Activated B cell treated with CpG ODN at 0.5 μM for 24 hours (primary cell): ENCODE measurements at regions of chr1 and their contacts with region 1.

Region 1: DNA sequence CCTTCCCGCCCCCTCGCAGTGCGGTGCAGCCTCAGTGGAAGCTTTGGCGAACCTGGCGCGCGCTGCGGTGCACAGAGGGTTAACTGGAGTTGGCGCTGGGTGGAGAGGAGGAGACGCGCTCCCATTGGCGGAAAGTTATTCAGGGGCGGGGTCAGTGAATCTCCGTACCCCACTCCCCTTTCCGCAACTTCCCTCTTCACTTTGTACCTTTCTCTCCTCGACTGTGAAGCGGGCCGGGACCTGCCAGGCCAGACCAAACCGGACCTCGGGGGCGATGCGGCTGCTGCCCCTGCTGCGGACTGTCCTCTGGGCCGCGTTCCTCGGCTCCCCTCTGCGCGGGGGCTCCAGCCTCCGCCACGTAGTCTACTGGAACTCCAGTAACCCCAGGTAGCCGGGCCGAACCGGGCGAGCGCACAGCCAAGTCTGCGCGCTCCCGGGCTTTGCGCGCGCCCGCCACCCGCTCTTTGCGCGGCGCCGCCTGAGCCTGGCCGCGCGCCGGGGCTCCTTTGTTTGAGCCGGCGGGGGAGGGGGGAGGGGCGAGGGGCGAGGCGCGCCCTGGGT is at the start of gene EFNA4:
- DNase-seq: peak; percentile 73
- ATAC-seq: peak; percentile 83
- H3K4me3 Mint-ChIP-seq: peak within 1 kb of the TSS; percentile 83
- H3K27ac Mint-ChIP-seq: peak within 1 kb of the TSS; percentile 67
- H3K4me1 Mint-ChIP-seq: peaks cover 50% of the 10 kb centered on the region
- H3K27me3 Mint-ChIP-seq: no peaks in the 10 kb centered on the region
- CTCF ChIP-seq: no peak
- total RNA-seq, gene EFNA4: 7.8 and 9.5 TPM in 2 replicates

Region 2: DNA sequence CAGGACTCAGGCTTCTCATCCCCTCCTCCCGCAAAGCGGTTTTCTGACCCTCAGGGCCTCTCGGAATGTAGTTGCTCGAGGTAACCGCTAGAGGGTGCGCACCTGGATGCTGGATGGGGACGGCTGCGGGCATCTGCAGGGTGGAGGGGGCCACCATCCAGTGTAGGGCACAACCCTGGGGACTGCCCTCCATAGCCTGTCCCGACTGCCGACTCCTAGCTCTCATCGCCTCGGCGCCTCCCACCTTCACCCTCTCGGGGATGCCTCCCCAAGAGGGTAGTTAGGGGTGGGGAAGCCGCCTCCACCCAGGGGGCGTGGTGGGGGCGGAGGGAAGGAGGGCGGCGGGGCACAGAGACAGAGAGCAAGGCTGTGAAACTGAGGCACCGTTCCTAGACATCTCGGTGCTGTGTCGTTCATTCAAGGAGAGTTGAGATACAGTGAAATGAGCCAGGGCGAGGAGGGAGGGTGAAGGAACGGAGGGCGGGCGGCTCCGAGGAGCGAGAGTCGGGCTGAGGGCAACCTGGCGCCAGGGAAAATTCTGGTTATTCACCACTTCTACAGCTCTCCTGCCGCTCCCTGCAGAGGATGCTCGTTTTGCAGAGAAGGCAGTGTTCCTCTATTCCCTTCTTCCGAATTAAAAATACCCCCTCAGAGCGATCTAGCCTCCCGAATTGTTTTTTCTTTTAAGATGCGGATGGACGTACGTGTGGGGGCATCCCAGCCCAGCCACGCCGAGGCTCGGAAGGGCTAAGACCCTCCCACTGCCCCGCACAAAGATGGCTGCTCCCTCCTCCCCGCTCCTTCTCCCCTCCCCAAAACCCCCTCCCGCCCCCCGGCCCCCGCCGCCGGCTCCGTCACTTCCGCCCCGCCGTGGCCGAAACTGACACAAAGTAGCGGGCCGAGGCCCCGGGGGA is 738.7 kb before region 1 on chr1 and contains the start of gene ATP8B2:
- CTCF ChIA-PET with region 1: no interaction called
- POLR2A ChIA-PET with region 1: no interaction called
- intact Hi-C with region 1: loop called (anchors 5 kb)
- DNase-seq: peak; percentile 74
- ATAC-seq: peak; percentile 67
- H3K4me3 Mint-ChIP-seq: peak within 1 kb of the TSS; percentile 95
- H3K27ac Mint-ChIP-seq: peak within 1 kb of the TSS; percentile 88
- H3K4me1 Mint-ChIP-seq: peaks cover 41% of the 10 kb centered on the region
- H3K27me3 Mint-ChIP-seq: peaks cover 17% of the 10 kb centered on the region
- CTCF ChIP-seq: peak; percentile 71
- total RNA-seq, gene ATP8B2: 24.3 and 27.3 TPM in 2 replicates

Region 3: DNA sequence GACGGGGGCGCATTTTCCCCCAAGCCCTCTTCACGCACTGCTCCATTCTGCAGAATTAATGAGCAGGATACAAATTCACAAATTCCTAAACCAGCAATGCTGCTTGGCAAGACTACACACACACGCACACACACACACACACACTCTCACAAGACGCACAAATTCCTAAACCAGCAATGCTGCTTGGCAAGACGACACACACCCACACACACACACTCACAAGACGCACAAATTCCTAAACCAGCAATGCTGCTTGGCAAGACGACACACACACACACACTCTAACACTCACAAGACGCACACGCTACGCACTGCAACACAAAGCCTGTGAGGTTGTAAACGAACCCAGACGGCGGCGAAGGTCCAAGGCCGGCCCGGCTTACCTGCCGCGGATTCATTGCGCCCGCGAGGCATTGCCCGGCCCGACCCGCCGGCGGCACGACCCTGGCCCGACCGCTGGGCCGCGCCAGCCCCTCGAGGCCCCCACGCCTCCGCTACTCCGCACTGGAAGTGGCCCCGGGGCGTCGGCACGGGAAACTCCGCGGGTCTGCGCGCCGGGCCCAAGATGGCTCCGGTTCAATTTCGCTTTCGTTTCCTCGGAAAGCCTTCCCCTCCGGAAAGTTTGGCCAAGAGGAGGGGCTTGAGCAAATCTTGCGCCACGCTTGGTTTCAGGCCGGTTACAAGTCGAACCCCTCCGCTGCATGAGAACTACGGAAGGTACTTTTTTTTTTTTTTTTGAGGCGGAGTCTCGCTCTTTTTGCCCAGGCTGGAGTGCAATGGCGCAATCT is 455.8 kb before region 1 on chr1 and contains the start of gene ADAR:
- CTCF ChIA-PET with region 1: no interaction called
- POLR2A ChIA-PET with region 1: no interaction called
- intact Hi-C with region 1: loop called (anchors 5 kb)
- DNase-seq: peak; percentile 80
- ATAC-seq: peak; percentile 91
- H3K4me3 Mint-ChIP-seq: peak within 1 kb of the TSS; percentile 89
- H3K27ac Mint-ChIP-seq: peak within 1 kb of the TSS; percentile 90
- H3K4me1 Mint-ChIP-seq: peaks cover 73% of the 10 kb centered on the region
- H3K27me3 Mint-ChIP-seq: no peaks in the 10 kb centered on the region
- CTCF ChIP-seq: no peak
- total RNA-seq, gene ADAR: 209 and 216 TPM in 2 replicates

Region 4: DNA sequence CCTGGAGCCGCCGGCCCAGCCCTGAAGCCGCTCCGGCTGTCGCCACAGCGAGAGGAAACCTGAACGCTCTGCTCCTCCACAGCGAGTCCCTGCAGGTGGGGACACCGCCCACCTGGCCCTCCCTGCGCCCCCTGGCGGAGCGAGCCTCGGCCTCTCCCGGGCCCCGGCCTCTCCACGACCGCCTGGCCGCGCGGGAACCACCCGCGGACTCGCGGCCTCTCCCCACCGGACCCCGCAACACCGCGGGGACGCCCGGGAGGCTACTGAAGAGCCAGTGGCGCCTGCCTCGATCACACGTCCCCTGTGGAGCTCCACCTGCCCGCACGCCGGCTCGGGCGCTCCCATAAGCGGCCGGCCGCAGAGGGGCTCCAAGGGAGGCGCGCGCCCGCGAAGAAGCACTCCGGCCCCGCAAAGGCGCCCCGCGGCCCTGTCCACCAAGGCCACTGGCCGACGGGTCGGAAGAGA is 303.1 kb before region 1 on chr1:
- CTCF ChIA-PET with region 1: interaction called, 3 read pairs
- POLR2A ChIA-PET with region 1: no interaction called
- intact Hi-C with region 1: loop called (anchors 2 kb)
- DNase-seq: peak; percentile 86
- ATAC-seq: peak; percentile 98
- H3K4me3 Mint-ChIP-seq: no peak overlapping the region
- H3K27ac Mint-ChIP-seq: no peak overlapping the region
- H3K4me1 Mint-ChIP-seq: no peaks in the 10 kb centered on the region
- H3K27me3 Mint-ChIP-seq: peaks cover 27% of the 10 kb centered on the region
- CTCF ChIP-seq: no peak

Region 5: GRCh38 chr1:154847891-154848290 is 215.7 kb before region 1 on chr1:
- CTCF ChIA-PET with region 1: no interaction called
- POLR2A ChIA-PET with region 1: no interaction called
- intact Hi-C with region 1: no loop called
- DNase-seq: no peak
- ATAC-seq: no peak
- H3K4me3 Mint-ChIP-seq: no peak overlapping the region
- H3K27ac Mint-ChIP-seq: no peak overlapping the region
- H3K4me1 Mint-ChIP-seq: peaks cover 14% of the 10 kb centered on the region
- H3K27me3 Mint-ChIP-seq: peaks cover 11% of the 10 kb centered on the region
- CTCF ChIP-seq: no peak

Region 6: GRCh38 chr1:154961497-154962262 is 102.0 kb before region 1 on chr1 and contains the start of gene PYGO2:
- CTCF ChIA-PET with region 1: interaction called, 3 read pairs
- POLR2A ChIA-PET with region 1: interaction called, 8 read pairs
- intact Hi-C with region 1: loop called (anchors 1 kb)
- DNase-seq: peak; percentile 85
- ATAC-seq: peak; percentile 88
- H3K4me3 Mint-ChIP-seq: peak within 1 kb of the TSS; percentile 87
- H3K27ac Mint-ChIP-seq: peak within 1 kb of the TSS; percentile 86
- H3K4me1 Mint-ChIP-seq: peaks cover 45% of the 10 kb centered on the region
- H3K27me3 Mint-ChIP-seq: no peaks in the 10 kb centered on the region
- CTCF ChIP-seq: no peak
- total RNA-seq, gene PYGO2: 33.1 and 38.1 TPM in 2 replicates

Region 7: GRCh38 chr1:155017041-155017945 is 46.3 kb before region 1 on chr1:
- CTCF ChIA-PET with region 1: interaction called, 10 read pairs
- POLR2A ChIA-PET with region 1: interaction called, 3 read pairs
- intact Hi-C with region 1: loop called (anchors 2 kb)
- DNase-seq: peak; percentile 88
- ATAC-seq: peak; percentile 77
- H3K4me3 Mint-ChIP-seq: peak overlapping the region; percentile 79
- H3K27ac Mint-ChIP-seq: peak overlapping the region; percentile 88
- H3K4me1 Mint-ChIP-seq: peaks cover 71% of the 10 kb centered on the region
- H3K27me3 Mint-ChIP-seq: no peaks in the 10 kb centered on the region
- CTCF ChIP-seq: no peak

Region 8: DNA sequence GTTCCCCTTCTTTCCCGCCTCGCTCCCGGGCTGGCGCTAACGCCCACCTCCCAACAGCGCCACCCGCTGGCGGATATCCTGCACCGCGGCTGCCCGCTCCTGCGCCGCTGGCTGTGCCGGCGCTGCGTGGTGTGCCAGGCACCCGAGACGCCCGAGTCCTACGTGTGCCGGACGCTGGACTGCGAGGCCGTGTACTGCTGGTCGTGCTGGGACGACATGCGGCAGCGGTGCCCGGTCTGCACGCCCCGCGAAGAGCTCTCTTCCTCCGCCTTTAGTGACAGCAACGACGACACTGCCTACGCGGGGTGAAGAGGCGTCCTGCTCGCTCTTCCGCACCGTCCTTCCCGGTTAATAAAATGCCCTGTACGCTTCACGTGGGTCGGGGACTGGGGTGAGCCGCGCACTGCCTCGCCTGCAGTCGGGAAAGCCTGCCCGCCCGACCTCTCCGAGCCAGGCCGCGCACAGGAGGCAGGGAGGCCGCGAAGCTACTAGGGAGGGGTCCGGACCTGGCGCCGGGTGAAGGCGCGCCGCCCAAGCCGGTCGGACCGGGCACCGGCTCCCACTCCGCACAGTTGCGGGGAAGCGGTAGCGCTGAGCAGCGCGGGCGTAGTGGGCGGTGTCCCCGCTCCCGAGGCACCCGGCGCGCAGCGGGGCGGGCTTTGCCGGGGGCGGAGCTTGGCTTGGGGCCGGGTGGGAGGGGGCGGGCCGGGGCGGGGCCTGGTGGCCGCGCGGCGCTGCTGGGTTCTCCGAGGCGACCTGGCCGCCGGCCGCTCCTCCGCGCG is 12.9 kb before region 1 on chr1 and contains the start of gene ADAM15:
- CTCF ChIA-PET with region 1: interaction called, 101 read pairs
- POLR2A ChIA-PET with region 1: interaction called, 9 read pairs
- intact Hi-C with region 1: loop called (anchors 1 kb)
- DNase-seq: peak; percentile 78
- ATAC-seq: peak; percentile 83
- H3K4me3 Mint-ChIP-seq: peak within 1 kb of the TSS; percentile 86
- H3K27ac Mint-ChIP-seq: no peak within 1 kb of the TSS
- H3K4me1 Mint-ChIP-seq: peaks cover 22% of the 10 kb centered on the region
- H3K27me3 Mint-ChIP-seq: no peaks in the 10 kb centered on the region
- CTCF ChIP-seq: peak; percentile 56
- total RNA-seq, gene ADAM15: 11.3 and 13.7 TPM in 2 replicates